Activated CD4-positive, alpha-beta memory T cell treated with anti-CD3 and anti-CD28 coated beads, Interleukin-2, amount 10 ng/mL, durations not matched to agents 7 days and 5 days (primary cell): ENCODE measurements at regions of chr10 and their contacts with region 1.

Region 1: DNA sequence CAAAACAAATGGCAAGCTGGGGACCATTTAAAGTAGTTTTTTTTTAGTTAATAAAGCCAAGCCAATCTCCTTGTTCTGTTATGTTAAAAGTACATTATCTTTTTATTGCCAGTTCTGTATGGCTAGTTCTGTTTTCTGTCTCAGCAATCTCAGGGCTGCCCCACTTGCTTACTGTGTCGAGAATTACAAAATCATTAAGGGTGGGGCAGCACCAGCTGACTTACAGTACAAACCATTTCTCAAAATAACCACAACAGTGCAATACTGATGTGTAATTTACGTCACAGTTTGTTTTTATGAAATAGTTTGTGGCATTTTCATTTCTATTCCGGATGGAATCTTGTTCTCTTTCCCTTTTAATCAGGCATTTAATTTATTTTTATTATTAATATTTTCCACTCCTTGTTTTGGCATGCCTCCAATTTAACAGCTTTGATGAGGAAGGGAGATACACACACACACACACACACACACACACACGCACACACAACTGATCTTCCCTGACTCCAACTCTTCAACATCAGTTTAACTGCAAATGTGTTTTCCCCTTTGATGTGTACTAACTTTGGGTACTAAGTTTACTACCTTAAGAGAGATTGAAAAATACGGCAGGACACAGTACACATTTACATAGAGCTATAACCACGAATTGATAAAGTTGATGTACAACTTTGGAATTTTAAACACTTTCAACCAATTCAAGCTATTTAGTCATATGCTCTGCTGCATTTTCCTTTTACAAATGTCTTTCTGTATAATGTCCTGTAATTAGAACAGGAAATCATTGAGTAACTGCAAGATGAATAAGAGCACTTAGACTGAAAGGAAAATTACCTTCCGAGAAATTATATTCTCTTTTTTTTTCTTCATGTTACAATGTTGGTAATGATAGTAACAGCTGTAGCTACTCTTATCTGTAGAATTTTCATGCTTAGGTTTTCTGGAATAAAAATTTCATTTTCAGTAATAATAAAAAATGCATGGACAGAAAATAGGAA is 91.5 kb downstream of the ARID5B start:
- DNase-seq: peak; percentile 75
- H3K4me3 Mint-ChIP-seq: peak overlapping the region; percentile 69
- H3K27ac Mint-ChIP-seq: peak overlapping the region; percentile 91
- H3K4me1 Mint-ChIP-seq: peaks cover 76% of the 10 kb centered on the region
- H3K27me3 Mint-ChIP-seq: no peaks in the 10 kb centered on the region

Region 2: GRCh38 chr10:61812052-61812721 is 180.8 kb before region 1 on chr10:
- CTCF ChIA-PET with region 1: no interaction called
- POLR2A ChIA-PET with region 1: no interaction called
- DNase-seq: no peak
- H3K4me3 Mint-ChIP-seq: no peak overlapping the region
- H3K27ac Mint-ChIP-seq: no peak overlapping the region
- H3K4me1 Mint-ChIP-seq: peaks cover 7% of the 10 kb centered on the region
- H3K27me3 Mint-ChIP-seq: peaks cover 5% of the 10 kb centered on the region

Region 3: DNA sequence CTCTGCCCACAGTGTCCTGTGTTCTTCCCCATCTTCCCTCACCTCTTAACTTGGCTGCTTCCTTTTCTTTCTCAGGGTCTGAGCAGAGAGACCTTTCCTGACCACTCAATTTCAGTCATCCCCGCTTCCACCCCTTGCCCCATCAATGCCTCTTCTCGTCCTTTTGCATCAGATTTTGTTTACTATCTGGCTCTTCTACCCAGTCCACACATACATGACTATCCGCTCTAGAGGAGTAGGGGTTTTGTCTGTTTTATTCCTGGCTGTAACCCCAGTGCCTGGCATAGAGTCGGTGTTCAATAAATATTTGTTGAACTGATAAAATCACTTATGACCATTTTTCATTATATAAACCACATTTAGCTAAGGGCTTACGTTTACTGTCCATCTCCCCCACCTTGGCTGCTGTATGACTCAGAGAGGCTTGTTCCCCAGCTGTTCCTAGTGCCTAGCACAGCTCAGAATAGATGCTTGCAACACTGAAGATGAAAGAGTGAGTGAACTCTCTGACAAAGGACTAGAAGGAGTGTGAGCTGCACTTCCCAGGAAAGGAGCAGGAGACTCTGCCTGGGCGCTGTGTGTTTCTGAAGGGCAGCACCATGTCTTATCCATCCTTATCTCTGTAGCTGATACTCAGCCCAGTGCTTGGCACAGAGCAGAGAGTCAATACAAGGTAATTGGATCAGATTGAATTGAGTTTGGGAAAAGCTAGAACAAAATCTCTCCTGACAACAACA is 69.6 kb before region 1 on chr10:
- CTCF ChIA-PET with region 1: no interaction called
- POLR2A ChIA-PET with region 1: no interaction called
- DNase-seq: no peak
- H3K4me3 Mint-ChIP-seq: no peak overlapping the region
- H3K27ac Mint-ChIP-seq: no peak overlapping the region
- H3K4me1 Mint-ChIP-seq: peaks cover 34% of the 10 kb centered on the region
- H3K27me3 Mint-ChIP-seq: no peaks in the 10 kb centered on the region

Region 4: GRCh38 chr10:61937631-61938351 is 55.2 kb before region 1 on chr10:
- CTCF ChIA-PET with region 1: interaction called, 10 read pairs
- POLR2A ChIA-PET with region 1: interaction called, 24 read pairs
- DNase-seq: no peak
- H3K4me3 Mint-ChIP-seq: peak overlapping the region; percentile 37
- H3K27ac Mint-ChIP-seq: peak overlapping the region; percentile 64
- H3K4me1 Mint-ChIP-seq: peaks cover 86% of the 10 kb centered on the region
- H3K27me3 Mint-ChIP-seq: no peaks in the 10 kb centered on the region

Region 5: GRCh38 chr10:61943674-61944410 is 49.1 kb before region 1 on chr10:
- CTCF ChIA-PET with region 1: interaction called, 10 read pairs
- POLR2A ChIA-PET with region 1: interaction called, 24 read pairs
- DNase-seq: no peak
- H3K4me3 Mint-ChIP-seq: peak overlapping the region; percentile 68
- H3K27ac Mint-ChIP-seq: peak overlapping the region; percentile 87
- H3K4me1 Mint-ChIP-seq: peaks cover 56% of the 10 kb centered on the region
- H3K27me3 Mint-ChIP-seq: no peaks in the 10 kb centered on the region

Region 6: DNA sequence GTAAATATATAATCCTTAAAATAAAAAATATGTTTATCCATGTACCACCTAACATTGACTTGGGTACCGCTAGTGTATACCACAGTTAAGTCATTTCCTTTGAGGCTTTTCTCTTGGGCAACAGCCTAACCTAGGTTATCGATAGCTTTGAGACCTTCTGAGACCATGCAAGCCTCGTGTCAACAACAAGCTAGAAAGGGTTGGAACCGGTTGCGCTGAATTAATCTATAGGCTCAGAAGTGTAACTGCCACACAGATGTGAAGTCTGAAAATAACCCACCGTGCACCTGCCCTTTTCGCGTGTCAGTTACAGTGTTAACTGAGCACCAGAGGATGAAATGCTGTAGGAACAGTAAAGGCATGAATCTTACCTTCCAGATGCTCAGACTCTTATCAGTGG is 31.7 kb before region 1 on chr10:
- CTCF ChIA-PET with region 1: interaction called, 8 read pairs
- POLR2A ChIA-PET with region 1: interaction called, 36 read pairs
- DNase-seq: peak; percentile 59
- H3K4me3 Mint-ChIP-seq: peak overlapping the region; percentile 39
- H3K27ac Mint-ChIP-seq: peak overlapping the region; percentile 90
- H3K4me1 Mint-ChIP-seq: peaks cover 81% of the 10 kb centered on the region
- H3K27me3 Mint-ChIP-seq: no peaks in the 10 kb centered on the region

Region 7: DNA sequence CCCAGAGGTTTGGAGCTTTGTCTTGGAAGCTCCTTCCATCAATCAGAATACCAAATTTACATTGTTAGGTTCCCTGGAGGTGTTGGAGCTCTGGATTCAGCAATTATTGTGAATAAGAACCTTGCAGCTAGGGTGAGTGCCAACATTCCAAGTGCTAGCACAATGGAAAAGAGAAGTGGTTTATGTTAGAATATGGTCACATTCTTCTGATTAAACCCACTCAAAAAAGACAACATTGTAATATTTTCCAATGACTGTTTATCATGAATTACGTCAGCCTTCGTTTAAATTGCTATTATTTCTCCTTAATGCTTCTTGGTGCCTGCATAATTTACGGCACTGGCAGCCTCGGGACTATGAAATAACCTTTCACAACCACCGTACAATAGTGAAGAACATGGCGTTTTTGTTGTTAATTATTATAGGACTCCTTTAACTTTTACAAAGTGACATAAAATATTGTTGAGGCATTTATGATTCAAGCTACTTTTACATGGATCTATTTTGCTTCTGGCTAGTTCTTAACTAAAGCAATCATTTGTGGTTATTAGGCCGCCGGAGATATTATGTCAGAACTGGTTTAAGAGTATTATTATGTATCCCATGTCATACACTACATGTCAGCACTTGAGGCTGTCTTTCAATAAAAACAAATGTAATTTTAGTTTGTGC is 26.2 kb after region 1 on chr10:
- CTCF ChIA-PET with region 1: interaction called, 3 read pairs
- POLR2A ChIA-PET with region 1: interaction called, 28 read pairs
- DNase-seq: no peak
- H3K4me3 Mint-ChIP-seq: no peak overlapping the region
- H3K27ac Mint-ChIP-seq: peak overlapping the region; percentile 71
- H3K4me1 Mint-ChIP-seq: peaks cover 77% of the 10 kb centered on the region
- H3K27me3 Mint-ChIP-seq: no peaks in the 10 kb centered on the region

Region 8: GRCh38 chr10:62025901-62026879 is 33.2 kb after region 1 on chr10:
- CTCF ChIA-PET with region 1: interaction called, 3 read pairs
- POLR2A ChIA-PET with region 1: interaction called, 28 read pairs
- DNase-seq: no peak
- H3K4me3 Mint-ChIP-seq: no peak overlapping the region
- H3K27ac Mint-ChIP-seq: no peak overlapping the region
- H3K4me1 Mint-ChIP-seq: peaks cover 78% of the 10 kb centered on the region
- H3K27me3 Mint-ChIP-seq: no peaks in the 10 kb centered on the region

Region 9: DNA sequence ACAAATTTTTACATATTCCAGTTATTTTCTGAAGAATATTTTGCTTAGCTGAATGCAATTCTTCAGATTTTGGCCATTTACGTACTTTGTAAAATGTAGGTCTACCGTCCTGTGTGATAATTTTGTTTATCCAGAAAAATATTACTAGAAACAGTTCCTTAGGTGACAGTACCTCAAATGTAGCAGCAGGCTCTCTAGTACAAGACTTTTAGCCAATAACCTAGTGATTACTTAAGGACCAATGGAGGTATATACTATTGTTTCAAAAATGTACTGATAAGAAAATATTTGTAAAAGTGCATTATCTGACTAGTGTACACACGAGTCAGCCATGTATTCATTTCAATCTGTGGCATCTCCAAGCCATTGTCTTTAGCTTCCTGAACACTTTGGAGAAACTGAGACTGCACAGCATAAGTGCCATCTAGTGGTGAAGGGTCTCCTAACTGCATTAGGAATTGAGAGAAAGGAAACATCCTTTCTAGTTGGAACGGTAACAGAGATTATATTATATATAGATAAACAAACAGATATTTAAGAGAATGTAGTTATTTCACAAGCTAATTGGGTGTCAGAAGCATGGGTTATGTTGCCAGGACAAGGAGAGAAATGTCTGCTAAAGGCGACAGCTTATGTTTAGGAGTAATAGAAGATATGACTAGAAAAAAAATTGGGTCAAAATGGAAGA is 252.0 kb after region 1 on chr10:
- CTCF ChIA-PET with region 1: interaction called, 9 read pairs
- POLR2A ChIA-PET with region 1: interaction called, 19 read pairs
- DNase-seq: peak; percentile 59
- H3K4me3 Mint-ChIP-seq: peak overlapping the region; percentile 52
- H3K27ac Mint-ChIP-seq: peak overlapping the region; percentile 65
- H3K4me1 Mint-ChIP-seq: peaks cover 38% of the 10 kb centered on the region
- H3K27me3 Mint-ChIP-seq: no peaks in the 10 kb centered on the region